Activated T-helper 2 cell treated with anti-CD3 and anti-CD28 coated beads, Interferon-gamma antibody, Interleukin-2, Interleukin-4, amounts not matched to agents 10 μg/mL and 5 μg/mL and 100 μg/mL, durations not matched to agents 14 hours and 24 hours and 36 hours (primary cell): ENCODE measurements at regions of chr5 and their contacts with region 1.

Region 1: GRCh38 chr5:55650386-55650785 is 61.7 kb downstream of the SLC38A9 start:
- DNase-seq: no peak
- H3K4me3 Mint-ChIP-seq: peak overlapping the region; percentile 43
- H3K27ac Mint-ChIP-seq: peak overlapping the region; percentile 29
- H3K4me1 Mint-ChIP-seq: peaks cover 28% of the 10 kb centered on the region
- H3K27me3 Mint-ChIP-seq: no peaks in the 10 kb centered on the region

Region 2: GRCh38 chr5:55564721-55565120 is 85.7 kb before region 1 on chr5:
- intact Hi-C with region 1: no loop called
- DNase-seq: no peak
- H3K4me3 Mint-ChIP-seq: no peak overlapping the region
- H3K27ac Mint-ChIP-seq: no peak overlapping the region
- H3K4me1 Mint-ChIP-seq: peaks cover 9% of the 10 kb centered on the region
- H3K27me3 Mint-ChIP-seq: no peaks in the 10 kb centered on the region

Region 3: DNA sequence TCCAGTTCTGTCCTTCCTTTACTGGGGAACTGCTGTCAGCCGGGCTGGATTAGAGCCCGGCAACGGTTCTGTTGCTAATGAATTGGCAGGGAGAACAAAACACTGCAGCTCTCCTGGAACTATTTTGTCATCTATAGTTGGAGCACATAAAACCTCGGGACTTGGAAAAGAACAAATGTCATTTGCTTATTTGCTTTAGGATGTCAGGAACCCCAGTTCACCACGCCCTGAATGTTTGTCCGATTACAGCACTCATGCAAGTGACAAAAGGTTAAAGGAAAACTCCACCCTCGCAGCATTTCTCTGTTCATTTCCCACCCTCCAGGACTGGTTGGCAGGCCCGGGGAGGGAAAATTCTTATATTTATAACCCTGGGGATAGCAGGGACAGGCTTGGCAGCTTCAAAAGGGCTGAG is 49.2 kb before region 1 on chr5:
- intact Hi-C with region 1: loop called (anchors 10 kb)
- DNase-seq: no peak
- H3K4me3 Mint-ChIP-seq: peak overlapping the region; percentile 51
- H3K27ac Mint-ChIP-seq: peak overlapping the region; percentile 83
- H3K4me1 Mint-ChIP-seq: peaks cover 63% of the 10 kb centered on the region
- H3K27me3 Mint-ChIP-seq: no peaks in the 10 kb centered on the region